ENCODE measurements at regions of chr19 and their contacts with region 1.

Region 1: GRCh38 chr19:43438291-43439096 is 23.8 kb downstream of the TEX101 start:
- DNase-seq: peak in 2 of 5 donors; percentile 12 to 50
- H3K4me3 ChIP-seq: peak overlapping the region in 1 of 2 donors; percentile 38
- H3K4me3 Mint-ChIP-seq: peak overlapping the region in 6 of 8 donors; percentile 13 to 61 (median 52)
- H3K27ac ChIP-seq: peak overlapping the region; percentile 75
- H3K27ac Mint-ChIP-seq: peak overlapping the region; percentile 95 to 98 (median 96)
- H3K4me1 ChIP-seq: peaks cover 44% of the 10 kb centered on the region
- H3K4me1 Mint-ChIP-seq: peaks cover 35 to 66% (median 47%) of the 10 kb centered on the region in 4 donors
- H3K27me3 ChIP-seq: no peaks in the 10 kb centered on the region
- H3K27me3 Mint-ChIP-seq: no peaks in the 10 kb centered on the region

Region 2: GRCh38 chr19:42693764-42694350 is 744.6 kb before region 1 on chr19:
- CTCF ChIA-PET with region 1: no interaction called
- POLR2A ChIA-PET with region 1: no interaction called
- intact Hi-C with region 1: no loop called
- DNase-seq: no peak
- H3K4me3 ChIP-seq: no peak overlapping the region
- H3K4me3 Mint-ChIP-seq: no peak overlapping the region
- H3K27ac ChIP-seq: no peak overlapping the region
- H3K27ac Mint-ChIP-seq: no peak overlapping the region
- H3K4me1 ChIP-seq: no peaks in the 10 kb centered on the region
- H3K4me1 Mint-ChIP-seq: no peaks in the 10 kb centered on the region
- H3K27me3 ChIP-seq: no peaks in the 10 kb centered on the region
- H3K27me3 Mint-ChIP-seq: peaks cover 25 to 29% of the 10 kb centered on the region in 2 donors

Region 3: DNA sequence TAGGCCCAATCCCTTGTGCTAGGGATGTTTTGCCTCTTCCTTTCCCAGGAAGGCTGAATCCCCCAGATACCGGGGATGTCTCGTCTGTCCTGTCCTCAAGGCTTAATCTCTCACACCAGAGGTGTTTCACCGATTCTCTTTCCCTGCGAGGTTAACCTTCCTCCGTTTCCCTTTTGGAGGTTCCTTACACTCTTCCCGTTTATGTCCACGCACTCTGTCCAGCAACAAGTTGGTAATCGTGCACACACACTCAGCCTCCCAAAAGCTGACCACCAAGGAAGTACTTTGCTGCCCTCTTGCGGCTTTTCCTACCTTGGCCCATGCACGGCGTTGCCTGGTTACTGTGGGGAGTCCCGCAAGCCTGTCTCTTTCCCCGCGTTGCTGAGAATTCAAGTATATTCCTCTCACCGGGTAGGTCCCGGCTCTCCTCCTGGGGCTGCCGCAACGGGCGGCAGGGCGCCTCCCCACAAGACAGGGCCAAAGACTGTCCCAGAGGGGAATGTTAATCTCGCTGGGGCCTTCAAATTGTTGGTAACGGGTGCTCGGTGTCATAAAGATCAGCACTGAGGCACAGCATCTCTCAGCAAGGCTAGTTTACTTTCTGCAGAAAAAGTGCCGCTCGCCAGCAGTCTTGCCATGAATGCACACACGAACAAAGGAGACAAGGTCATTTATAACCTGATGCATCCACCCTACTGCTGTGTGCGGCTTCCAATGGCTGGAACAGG is 121.7 kb before region 1 on chr19:
- CTCF ChIA-PET with region 1: no interaction called
- POLR2A ChIA-PET with region 1: no interaction called
- intact Hi-C with region 1: no loop called
- DNase-seq: no peak
- H3K4me3 ChIP-seq: no peak overlapping the region
- H3K4me3 Mint-ChIP-seq: no peak overlapping the region
- H3K27ac ChIP-seq: no peak overlapping the region
- H3K27ac Mint-ChIP-seq: no peak overlapping the region
- H3K4me1 ChIP-seq: no peaks in the 10 kb centered on the region
- H3K4me1 Mint-ChIP-seq: no peaks in the 10 kb centered on the region
- H3K27me3 ChIP-seq: no peaks in the 10 kb centered on the region
- H3K27me3 Mint-ChIP-seq: peaks cover 3 to 5% of the 10 kb centered on the region in 2 donors

Region 4: DNA sequence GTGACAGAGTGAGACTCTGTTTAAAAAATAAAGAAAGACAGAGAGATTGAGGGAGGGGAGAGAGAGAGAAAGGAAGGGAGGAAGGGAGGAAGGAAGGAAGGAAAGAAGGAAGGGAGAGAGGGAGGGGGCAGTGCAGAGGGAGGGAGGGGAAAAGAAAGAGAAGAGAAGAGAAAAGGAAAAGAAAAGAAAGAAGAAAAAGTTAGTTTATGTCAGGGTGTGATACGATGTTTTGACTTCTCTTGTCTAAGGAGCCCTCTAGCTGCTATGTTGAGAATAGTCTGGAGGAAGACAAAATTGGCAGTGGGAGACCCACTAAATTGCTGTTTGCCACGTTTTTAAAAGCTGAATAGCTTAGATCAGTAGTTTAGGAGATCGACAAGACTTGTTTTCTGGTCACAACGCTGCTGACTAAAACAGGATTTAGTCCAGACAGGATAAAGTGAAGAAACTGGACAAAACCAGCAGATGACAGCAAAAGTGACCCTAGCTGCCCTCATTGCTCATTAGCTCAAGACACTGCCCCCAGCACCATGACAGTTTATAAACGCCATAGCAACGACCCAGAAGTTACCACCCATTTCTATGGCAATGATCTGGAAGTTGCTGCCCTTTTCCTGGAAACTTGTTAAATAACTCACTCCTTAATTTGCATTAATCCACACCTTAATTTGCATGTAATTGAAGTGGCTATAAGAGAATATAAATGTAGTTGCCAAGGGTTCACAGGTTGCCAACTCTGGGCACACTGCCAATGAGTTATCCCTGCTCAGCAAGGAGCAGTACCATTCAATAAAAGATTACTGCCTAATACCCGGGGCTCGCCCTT is 12.7 kb before region 1 on chr19:
- CTCF ChIA-PET with region 1: interaction called, 413 read pairs
- POLR2A ChIA-PET with region 1: interaction called, 11 read pairs
- intact Hi-C with region 1: no loop called
- DNase-seq: peak in 1 of 5 donors; percentile 13
- H3K4me3 ChIP-seq: no peak overlapping the region
- H3K4me3 Mint-ChIP-seq: no peak overlapping the region
- H3K27ac ChIP-seq: no peak overlapping the region
- H3K27ac Mint-ChIP-seq: peak overlapping the region in 3 of 7 donors; percentile 17 to 85 (median 52)
- H3K4me1 ChIP-seq: peaks cover 18% of the 10 kb centered on the region
- H3K4me1 Mint-ChIP-seq: peaks cover 5 to 21% (median 10%) of the 10 kb centered on the region in 4 donors
- H3K27me3 ChIP-seq: no peaks in the 10 kb centered on the region
- H3K27me3 Mint-ChIP-seq: peaks cover 0 to 2% of the 10 kb centered on the region in 2 donors

Region 5: GRCh38 chr19:43463381-43464136 is 25.1 kb after region 1 on chr19:
- CTCF ChIA-PET with region 1: interaction called, 17 read pairs
- POLR2A ChIA-PET with region 1: interaction called, 76 read pairs
- intact Hi-C with region 1: no loop called
- DNase-seq: peak; percentile 98 to 100 (median 98)
- H3K4me3 ChIP-seq: peak overlapping the region; percentile 79 to 98
- H3K4me3 Mint-ChIP-seq: peak overlapping the region; percentile 90 to 98 (median 94)
- H3K27ac ChIP-seq: peak overlapping the region; percentile 80
- H3K27ac Mint-ChIP-seq: peak overlapping the region; percentile 95 to 100 (median 99)
- H3K4me1 ChIP-seq: peaks cover 34% of the 10 kb centered on the region
- H3K4me1 Mint-ChIP-seq: peaks cover 25 to 64% (median 43%) of the 10 kb centered on the region in 4 donors
- H3K27me3 ChIP-seq: no peaks in the 10 kb centered on the region
- H3K27me3 Mint-ChIP-seq: no peaks in the 10 kb centered on the region

Region 6: GRCh38 chr19:43474986-43475705 is 36.7 kb after region 1 on chr19:
- CTCF ChIA-PET with region 1: interaction called, 3 read pairs
- POLR2A ChIA-PET with region 1: interaction called, 6 read pairs
- intact Hi-C with region 1: loop called (anchors 5 kb)
- DNase-seq: peak; percentile 94 to 97 (median 95)
- H3K4me3 ChIP-seq: peak overlapping the region; percentile 26 to 53
- H3K4me3 Mint-ChIP-seq: peak overlapping the region; percentile 77 to 90 (median 86)
- H3K27ac ChIP-seq: peak overlapping the region; percentile 58
- H3K27ac Mint-ChIP-seq: peak overlapping the region; percentile 80 to 100 (median 99)
- H3K4me1 ChIP-seq: peaks cover 18% of the 10 kb centered on the region
- H3K4me1 Mint-ChIP-seq: peaks cover 12 to 31% (median 19%) of the 10 kb centered on the region in 4 donors
- H3K27me3 ChIP-seq: no peaks in the 10 kb centered on the region
- H3K27me3 Mint-ChIP-seq: no peaks in the 10 kb centered on the region

Region 7: GRCh38 chr19:43503501-43504425 is 65.3 kb after region 1 on chr19:
- CTCF ChIA-PET with region 1: interaction called, 3 read pairs
- POLR2A ChIA-PET with region 1: interaction called, 28 read pairs
- intact Hi-C with region 1: no loop called
- DNase-seq: peak; percentile 96 to 99 (median 97)
- H3K4me3 ChIP-seq: peak overlapping the region; percentile 73 to 74
- H3K4me3 Mint-ChIP-seq: peak overlapping the region; percentile 91 to 98 (median 94)
- H3K27ac ChIP-seq: peak overlapping the region; percentile 89
- H3K27ac Mint-ChIP-seq: peak overlapping the region; percentile 95 to 100 (median 98)
- H3K4me1 ChIP-seq: peaks cover 22% of the 10 kb centered on the region
- H3K4me1 Mint-ChIP-seq: peaks cover 16 to 51% (median 34%) of the 10 kb centered on the region in 4 donors
- H3K27me3 ChIP-seq: no peaks in the 10 kb centered on the region
- H3K27me3 Mint-ChIP-seq: no peaks in the 10 kb centered on the region

Region 8: DNA sequence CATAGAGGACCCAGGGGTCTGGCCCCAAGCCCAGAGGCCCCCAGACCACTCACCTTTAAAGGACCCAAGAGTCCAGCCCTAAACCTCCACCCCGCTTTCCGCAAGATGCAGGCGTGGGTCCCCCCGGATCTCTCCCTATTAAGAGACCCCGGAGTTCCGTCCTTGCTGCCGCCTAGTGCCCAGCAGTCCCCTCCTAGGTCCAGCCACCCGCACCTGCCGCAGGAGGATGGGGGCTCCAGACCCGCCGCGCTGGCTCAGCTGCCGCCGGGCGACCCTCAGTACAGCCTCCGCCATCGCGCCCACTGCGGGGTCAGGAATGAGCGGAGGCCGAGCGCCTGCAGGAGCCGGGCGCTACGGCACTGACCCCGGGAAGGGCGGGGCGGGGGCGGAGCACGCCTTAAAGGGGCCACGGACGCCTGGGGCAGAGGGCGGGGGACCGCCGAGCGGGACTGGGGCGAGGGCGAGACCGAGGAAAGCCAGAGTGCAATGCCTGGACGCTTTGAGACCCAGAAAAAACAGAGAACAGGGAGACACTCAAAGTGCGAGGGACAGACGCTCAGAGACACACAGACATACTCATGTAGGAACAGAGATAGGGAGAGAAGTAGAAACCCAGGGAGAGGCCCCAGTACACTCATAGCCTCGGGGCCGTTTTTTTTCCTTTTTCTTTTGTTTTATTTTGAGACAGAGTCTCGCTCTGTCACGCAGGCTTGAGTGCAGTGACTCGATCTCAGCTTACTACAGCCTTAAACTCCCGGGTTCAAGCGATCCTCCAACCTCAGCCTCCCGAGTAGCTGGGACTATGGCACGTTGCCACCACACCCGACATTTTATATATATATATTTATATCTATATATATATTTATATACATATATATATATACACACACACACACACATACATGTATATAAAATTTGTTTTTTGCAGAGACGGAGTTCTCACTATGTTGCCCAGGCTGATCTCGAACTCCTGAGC is 88.7 kb after region 1 on chr19 and contains the start of gene ETHE1:
- CTCF ChIA-PET with region 1: interaction called, 835 read pairs
- POLR2A ChIA-PET with region 1: interaction called, 28 read pairs
- intact Hi-C with region 1: no loop called
- DNase-seq: peak; percentile 52 to 68 (median 57)
- H3K4me3 ChIP-seq: peak within 1 kb of the TSS; percentile 60 to 90
- H3K4me3 Mint-ChIP-seq: peak within 1 kb of the TSS; percentile 75 to 94 (median 80)
- H3K27ac ChIP-seq: peak within 1 kb of the TSS; percentile 67
- H3K27ac Mint-ChIP-seq: peak within 1 kb of the TSS; percentile 37 to 94 (median 88)
- H3K4me1 ChIP-seq: peaks cover 27% of the 10 kb centered on the region
- H3K4me1 Mint-ChIP-seq: peaks cover 17 to 36% (median 22%) of the 10 kb centered on the region in 4 donors
- H3K27me3 ChIP-seq: no peaks in the 10 kb centered on the region
- H3K27me3 Mint-ChIP-seq: no peaks in the 10 kb centered on the region
- total RNA-seq, gene ETHE1: 23.9 to 29.1 TPM

Region 9: DNA sequence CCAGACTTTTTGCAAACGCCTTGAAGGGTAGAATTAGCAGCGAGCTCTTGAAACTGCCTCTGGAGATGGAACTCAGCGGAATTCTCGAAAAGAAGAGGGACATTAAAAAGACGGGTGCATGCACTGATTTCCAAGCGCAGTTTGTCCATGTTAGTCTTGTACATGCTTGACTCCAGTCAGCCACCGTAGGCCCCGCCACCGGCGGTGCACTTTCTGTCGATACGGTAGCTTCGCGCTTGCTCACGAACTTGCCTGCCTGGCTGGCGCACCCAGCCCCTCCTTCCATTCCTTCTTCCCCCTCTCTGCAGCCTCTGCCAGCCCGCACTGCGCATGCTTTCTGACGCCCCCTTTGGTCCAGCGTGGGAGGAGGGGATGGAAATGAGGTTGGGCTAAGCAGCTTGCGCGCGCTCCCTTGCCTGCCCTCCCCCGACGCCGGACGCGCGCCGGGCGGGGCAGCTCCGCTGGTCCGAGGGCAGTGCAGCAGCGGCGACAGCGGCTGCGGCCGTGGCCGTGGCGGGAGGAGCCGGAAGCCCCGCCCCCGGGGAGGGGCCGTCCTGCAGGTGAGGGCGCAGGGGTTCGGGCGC is 94.6 kb after region 1 on chr19 and contains the start of gene ZNF575:
- CTCF ChIA-PET with region 1: interaction called, 835 read pairs
- POLR2A ChIA-PET with region 1: interaction called, 28 read pairs
- intact Hi-C with region 1: no loop called
- DNase-seq: peak; percentile 82 to 88 (median 84)
- H3K4me3 ChIP-seq: peak within 1 kb of the TSS; percentile 69 to 88
- H3K4me3 Mint-ChIP-seq: peak within 1 kb of the TSS; percentile 91 to 99 (median 98)
- H3K27ac ChIP-seq: peak within 1 kb of the TSS; percentile 53
- H3K27ac Mint-ChIP-seq: peak within 1 kb of the TSS; percentile 95 to 99 (median 98)
- H3K4me1 ChIP-seq: peaks cover 17% of the 10 kb centered on the region
- H3K4me1 Mint-ChIP-seq: peaks cover 10 to 22% (median 15%) of the 10 kb centered on the region in 4 donors
- H3K27me3 ChIP-seq: no peaks in the 10 kb centered on the region
- H3K27me3 Mint-ChIP-seq: no peaks in the 10 kb centered on the region
- total RNA-seq, gene ZNF575: 11.0 to 11.8 TPM